Astrocyte of the cerebellum (primary cell): ENCODE measurements at regions of chr3 and their contacts with region 1.

Region 1: DNA sequence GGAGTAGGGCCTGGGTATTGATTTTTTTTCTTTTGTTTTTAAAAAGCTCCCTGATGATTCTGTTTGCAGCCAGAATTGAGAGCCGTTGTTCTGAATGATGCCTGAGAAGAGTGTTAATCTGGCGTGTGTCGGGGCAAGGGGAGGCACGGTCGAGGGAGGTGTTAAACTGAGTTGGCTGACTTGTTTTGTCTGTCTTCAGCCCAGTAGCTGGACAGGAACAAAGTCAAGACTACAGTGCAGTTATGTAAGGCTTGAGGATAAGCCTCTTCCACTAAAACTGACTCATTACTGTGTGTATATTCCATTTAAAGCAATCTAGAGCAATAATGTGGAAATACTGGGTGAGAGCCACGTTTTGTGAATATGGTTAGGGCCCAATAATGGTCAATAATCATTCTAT is 119.0 kb upstream of the DLG1 start:
- DNase-seq: no peak
- H3K4me3 ChIP-seq: no peak overlapping the region
- CTCF ChIP-seq: no peak

Region 2: GRCh38 chr3:197454014-197454413 is 36.6 kb after region 1 on chr3:
- in situ Hi-C with region 1: loop called (anchors 5 kb)
- DNase-seq: no peak
- H3K4me3 ChIP-seq: no peak overlapping the region
- CTCF ChIP-seq: peak; percentile 16

Region 3: GRCh38 chr3:197682713-197683112 is 265.3 kb after region 1 on chr3:
- in situ Hi-C with region 1: no loop called
- DNase-seq: no peak
- H3K4me3 ChIP-seq: no peak overlapping the region
- CTCF ChIP-seq: peak; percentile 6